Endothelial cell of umbilical vein (primary cell): ENCODE measurements at regions of chr3 and their contacts with region 1.

Region 1: DNA sequence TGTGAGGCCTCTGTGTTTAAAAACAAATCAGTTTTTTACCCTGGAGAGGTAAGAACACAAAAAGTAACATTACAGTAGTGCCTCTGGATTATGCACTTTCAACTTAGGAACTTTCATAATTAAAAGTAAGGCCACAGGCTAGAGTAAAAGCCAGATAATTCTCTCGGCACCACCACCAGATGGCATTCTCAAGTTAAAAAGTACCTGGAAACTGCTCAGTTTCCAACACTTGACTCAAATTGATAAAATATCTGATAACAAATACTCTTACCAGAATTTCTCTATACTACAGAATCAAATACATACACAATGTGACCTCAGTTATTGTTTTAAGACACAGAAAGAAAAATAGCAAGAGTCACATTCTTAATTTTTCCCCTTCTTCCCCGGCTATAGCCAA is 19.9 kb downstream of the SPICE1 start:
- DNase-seq: peak; percentile 61
- H3K4me3 ChIP-seq: no peak overlapping the region
- H3K27ac ChIP-seq: no peak overlapping the region
- H3K4me1 ChIP-seq: peaks cover 25% of the 10 kb centered on the region
- H3K27me3 ChIP-seq: no peaks in the 10 kb centered on the region
- CTCF ChIP-seq: peak in 1 of 2 donors; percentile 38
- POLR2A ChIP-seq: no peak

Region 2: DNA sequence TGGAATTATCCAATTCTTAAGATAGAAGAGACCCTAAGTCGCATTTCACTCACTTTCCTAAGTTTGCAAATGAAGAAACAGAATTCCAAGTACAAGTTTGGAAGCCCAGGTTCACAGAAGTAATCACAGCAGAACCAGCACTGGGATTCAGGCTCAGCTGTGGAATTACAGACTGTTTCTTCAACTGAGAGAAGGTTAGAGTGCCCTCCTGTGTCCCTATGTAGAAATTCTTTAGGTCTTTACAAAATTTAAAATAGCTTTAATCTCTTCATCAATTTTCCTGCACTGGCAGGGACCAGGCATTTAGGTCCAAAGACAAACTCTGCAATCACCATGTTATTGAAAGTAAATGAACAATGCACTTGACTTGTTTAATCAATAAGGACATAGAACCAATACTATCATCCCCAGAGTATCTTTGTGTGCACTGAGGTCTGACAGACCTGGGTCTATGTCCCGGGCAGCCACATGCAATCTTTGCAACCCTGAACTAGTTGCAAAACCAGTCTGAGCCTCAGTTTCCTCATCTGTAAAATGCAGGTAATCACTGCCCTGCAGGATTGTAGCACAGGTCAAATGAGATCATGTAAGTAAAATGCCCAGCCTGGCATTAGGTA is 1803.6 kb before region 1 on chr3:
- CTCF ChIA-PET with region 1: no interaction called
- POLR2A ChIA-PET with region 1: no interaction called
- dilution Hi-C with region 1: no loop called
- intact Hi-C with region 1: no loop called
- DNase-seq: peak; percentile 53
- H3K4me3 ChIP-seq: no peak overlapping the region
- H3K27ac ChIP-seq: no peak overlapping the region
- H3K4me1 ChIP-seq: peaks cover 12% of the 10 kb centered on the region
- H3K27me3 ChIP-seq: no peaks in the 10 kb centered on the region
- CTCF ChIP-seq: peak; percentile 17 to 40
- POLR2A ChIP-seq: no peak

Region 3: GRCh38 chr3:113514265-113514769 is 19.3 kb after region 1 on chr3:
- CTCF ChIA-PET with region 1: interaction called, 52 read pairs
- POLR2A ChIA-PET with region 1: interaction called, 12 read pairs
- dilution Hi-C with region 1: no loop called
- intact Hi-C with region 1: loop called (anchors 1 kb)
- DNase-seq: no peak
- H3K4me3 ChIP-seq: peak overlapping the region; percentile 69 to 88 (median 86)
- H3K27ac ChIP-seq: peak overlapping the region; percentile 75
- H3K4me1 ChIP-seq: peaks cover 9% of the 10 kb centered on the region
- H3K27me3 ChIP-seq: peaks cover 11 to 27% of the 10 kb centered on the region in 2 experiments
- CTCF ChIP-seq: no peak
- POLR2A ChIP-seq: no peak

Region 4: DNA sequence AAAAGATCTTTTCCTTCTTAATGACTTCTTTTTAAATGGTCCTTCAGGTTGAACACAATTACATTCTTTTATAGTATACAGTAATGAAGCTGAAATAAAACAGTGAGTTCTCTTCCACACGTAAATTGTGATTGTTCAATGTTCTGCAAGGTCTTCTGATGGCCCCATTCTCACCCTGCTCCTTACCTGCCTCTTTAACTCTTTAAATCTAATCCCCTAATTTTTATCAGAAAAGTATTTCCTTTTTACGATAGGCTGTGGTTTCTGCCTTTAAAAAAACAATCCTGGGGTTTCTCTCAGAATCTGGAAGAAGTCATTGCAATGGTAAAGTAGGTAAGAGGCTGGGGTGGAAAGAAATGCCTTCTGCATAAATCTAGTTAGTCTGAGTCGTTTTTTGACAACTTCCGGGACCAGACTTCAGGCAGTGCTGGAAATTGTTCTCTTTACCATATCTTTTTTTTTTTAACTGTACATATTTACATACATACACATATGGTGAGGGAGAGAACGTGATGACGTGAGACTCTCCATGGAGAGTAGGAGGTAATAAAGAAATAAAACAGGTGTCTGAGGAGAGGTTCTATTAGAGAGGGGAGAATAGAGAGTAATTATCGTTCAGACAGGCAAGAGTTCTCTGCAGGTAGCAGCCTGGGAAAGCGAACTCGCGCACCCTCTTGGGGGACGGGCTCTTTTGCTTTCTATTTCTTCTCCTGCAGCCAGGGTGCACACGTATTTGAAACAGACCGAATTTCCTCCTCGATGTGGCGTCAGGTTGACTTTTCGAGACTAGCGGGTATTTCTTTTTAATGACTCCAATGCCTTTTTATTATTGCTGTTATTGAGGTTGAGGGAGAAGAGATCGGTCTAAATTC is 37.0 kb after region 1 on chr3 and contains the start of gene SIDT1:
- CTCF ChIA-PET with region 1: interaction called, 3 read pairs
- POLR2A ChIA-PET with region 1: no interaction called
- dilution Hi-C with region 1: no loop called
- intact Hi-C with region 1: loop called (anchors 1 kb)
- DNase-seq: peak; percentile 21
- H3K4me3 ChIP-seq: peak within 1 kb of the TSS; percentile 41 to 65 (median 45)
- H3K27ac ChIP-seq: no peak within 1 kb of the TSS
- H3K4me1 ChIP-seq: peaks cover 17% of the 10 kb centered on the region
- H3K27me3 ChIP-seq: peaks cover 49 to 72% of the 10 kb centered on the region in 2 experiments
- CTCF ChIP-seq: no peak
- POLR2A ChIP-seq: no peak
- total RNA-seq, gene SIDT1: not detected in 2 replicates

Region 5: DNA sequence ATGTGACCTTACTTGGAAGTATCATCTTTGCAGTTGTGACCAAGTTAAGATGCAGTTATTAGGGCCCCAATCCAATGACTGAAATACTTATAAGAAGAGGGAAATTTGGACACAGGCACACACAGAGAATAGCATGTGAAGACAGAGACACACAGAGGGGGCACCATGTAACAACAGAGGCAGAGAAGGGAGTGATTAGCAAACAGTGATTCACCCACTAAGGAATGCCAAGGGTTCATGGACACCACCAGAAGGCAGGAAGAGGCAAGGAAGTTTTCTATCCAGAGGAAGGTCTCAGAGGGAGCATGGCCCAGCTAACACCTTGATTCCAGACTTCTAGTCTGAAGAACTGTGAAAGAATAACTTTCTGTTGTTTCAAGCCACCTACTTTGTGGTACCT is 62.3 kb after region 1 on chr3:
- CTCF ChIA-PET with region 1: interaction called, 25 read pairs
- POLR2A ChIA-PET with region 1: interaction called, 4 read pairs
- dilution Hi-C with region 1: no loop called
- intact Hi-C with region 1: loop called (anchors 1 kb)
- DNase-seq: peak; percentile 26
- H3K4me3 ChIP-seq: no peak overlapping the region
- H3K27ac ChIP-seq: no peak overlapping the region
- H3K4me1 ChIP-seq: peaks cover 11% of the 10 kb centered on the region
- H3K27me3 ChIP-seq: peaks cover 0 to 2% of the 10 kb centered on the region in 2 experiments
- CTCF ChIP-seq: no peak
- POLR2A ChIP-seq: no peak